ENCODE measurements at regions of chr4 and their contacts with region 1.

Region 1: GRCh38 chr4:163544407-163545038 is 50.0 kb downstream of the TMA16 start:
- DNase-seq: peak; percentile 50 to 81
- ATAC-seq: peak; percentile 88 to 92 (median 90)
- H3K4me3 ChIP-seq: peak overlapping the region; percentile 14
- H3K4me3 Mint-ChIP-seq: no peak overlapping the region
- H3K27ac ChIP-seq: peak overlapping the region; percentile 67
- H3K27ac Mint-ChIP-seq: no peak overlapping the region
- H3K4me1 ChIP-seq: no peaks in the 10 kb centered on the region
- H3K4me1 Mint-ChIP-seq: peaks cover 0 to 5% of the 10 kb centered on the region in 2 donors
- H3K27me3 ChIP-seq: no peaks in the 10 kb centered on the region
- H3K27me3 Mint-ChIP-seq: no peaks in the 10 kb centered on the region
- CTCF ChIP-seq: peak; percentile 92

Region 2: GRCh38 chr4:162497564-162498167 is 1046.9 kb before region 1 on chr4:
- intact Hi-C with region 1: loop called (anchors 10 kb)
- DNase-seq: peak in 1 of 2 donors; percentile 58
- ATAC-seq: peak in 2 of 3 donors; percentile 40 to 48
- H3K4me3 ChIP-seq: no peak overlapping the region
- H3K4me3 Mint-ChIP-seq: no peak overlapping the region
- H3K27ac ChIP-seq: no peak overlapping the region
- H3K27ac Mint-ChIP-seq: no peak overlapping the region
- H3K4me1 ChIP-seq: no peaks in the 10 kb centered on the region
- H3K4me1 Mint-ChIP-seq: no peaks in the 10 kb centered on the region
- H3K27me3 ChIP-seq: no peaks in the 10 kb centered on the region
- H3K27me3 Mint-ChIP-seq: no peaks in the 10 kb centered on the region
- CTCF ChIP-seq: peak; percentile 31

Region 3: DNA sequence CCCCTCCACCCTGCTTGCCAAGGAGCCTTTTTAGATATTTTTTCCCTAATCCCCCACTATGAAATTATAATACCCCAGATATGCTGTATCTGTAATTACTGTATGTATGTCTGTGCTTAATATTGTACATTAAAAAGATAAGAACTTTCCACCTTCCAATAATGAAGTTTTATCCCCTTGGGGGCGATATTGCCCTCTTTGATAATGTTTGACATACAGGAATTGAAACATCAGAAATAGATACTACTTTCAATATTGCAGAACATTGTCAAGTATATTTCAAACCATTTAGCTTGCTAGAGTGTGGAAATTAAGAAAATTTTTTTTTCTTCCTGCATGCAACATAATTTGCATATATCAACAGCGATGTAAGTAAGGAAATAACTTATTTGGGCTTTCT is 436.8 kb before region 1 on chr4:
- intact Hi-C with region 1: loop called (anchors 2 kb)
- DNase-seq: peak in 1 of 2 donors; percentile 16
- ATAC-seq: no peak
- H3K4me3 ChIP-seq: no peak overlapping the region
- H3K4me3 Mint-ChIP-seq: no peak overlapping the region
- H3K27ac ChIP-seq: no peak overlapping the region
- H3K27ac Mint-ChIP-seq: no peak overlapping the region
- H3K4me1 ChIP-seq: no peaks in the 10 kb centered on the region
- H3K4me1 Mint-ChIP-seq: peaks cover 6 to 8% of the 10 kb centered on the region in 2 donors
- H3K27me3 ChIP-seq: no peaks in the 10 kb centered on the region
- H3K27me3 Mint-ChIP-seq: no peaks in the 10 kb centered on the region
- CTCF ChIP-seq: no peak

Region 4: GRCh38 chr4:163494360-163495162 is 50.0 kb before region 1 on chr4 and contains the start of gene TMA16:
- intact Hi-C with region 1: loop called (anchors 2 kb)
- DNase-seq: peak; percentile 63 to 89
- ATAC-seq: peak; percentile 81 to 87 (median 87)
- H3K4me3 ChIP-seq: peak within 1 kb of the TSS; percentile 97
- H3K4me3 Mint-ChIP-seq: peak within 1 kb of the TSS; percentile 99
- H3K27ac ChIP-seq: peak within 1 kb of the TSS; percentile 76
- H3K27ac Mint-ChIP-seq: peak within 1 kb of the TSS; percentile 92 to 97
- H3K4me1 ChIP-seq: peaks cover 18% of the 10 kb centered on the region
- H3K4me1 Mint-ChIP-seq: peaks cover 35 to 43% of the 10 kb centered on the region in 2 donors
- H3K27me3 ChIP-seq: no peaks in the 10 kb centered on the region
- H3K27me3 Mint-ChIP-seq: peaks cover 0 to 3% of the 10 kb centered on the region in 2 donors
- CTCF ChIP-seq: no peak
- total RNA-seq, gene TMA16: 8.1 to 10.7 (median 9.1) TPM

Region 5: DNA sequence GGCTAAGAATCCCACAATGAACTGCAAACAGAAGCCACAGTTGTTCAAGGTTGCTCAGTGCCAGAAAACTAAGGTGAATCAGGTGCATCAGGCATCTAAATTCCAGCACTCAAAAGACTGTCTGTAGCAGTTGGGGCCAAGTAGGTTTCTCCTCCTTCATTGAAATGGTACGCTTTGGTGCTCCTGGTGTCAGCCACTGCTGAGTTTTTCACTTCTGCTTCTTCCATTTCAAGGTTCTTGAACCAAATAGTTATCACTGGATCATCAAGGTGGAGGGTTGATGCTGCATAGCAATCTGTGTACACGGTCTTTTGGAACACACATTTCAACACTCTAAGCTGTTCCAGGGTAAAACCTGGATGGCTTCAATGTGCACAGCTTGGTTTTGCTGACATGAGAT is 24.3 kb after region 1 on chr4:
- intact Hi-C with region 1: no loop called
- DNase-seq: no peak
- ATAC-seq: no peak
- H3K4me3 ChIP-seq: no peak overlapping the region
- H3K4me3 Mint-ChIP-seq: no peak overlapping the region
- H3K27ac ChIP-seq: no peak overlapping the region
- H3K27ac Mint-ChIP-seq: no peak overlapping the region
- H3K4me1 ChIP-seq: no peaks in the 10 kb centered on the region
- H3K4me1 Mint-ChIP-seq: no peaks in the 10 kb centered on the region
- H3K27me3 ChIP-seq: no peaks in the 10 kb centered on the region
- H3K27me3 Mint-ChIP-seq: peaks cover 3 to 10% of the 10 kb centered on the region in 2 donors
- CTCF ChIP-seq: no peak

Measured in natural killer cell (primary cell).